ENCODE measurements at regions of chrX and their contacts with region 1.

Region 1: GRCh38 chrX:46758906-46759644 is at the start of gene SLC9A7:
- DNase-seq: peak; percentile 84
- ATAC-seq: peak; percentile 81
- H3K4me3 ChIP-seq: peak within 1 kb of the TSS; percentile 98
- H3K27ac ChIP-seq: peak within 1 kb of the TSS; percentile 68
- H3K4me1 ChIP-seq: peaks cover 32% of the 10 kb centered on the region
- H3K27me3 ChIP-seq: no peaks in the 10 kb centered on the region
- CTCF ChIP-seq: peak; percentile 80
- total RNA-seq, gene SLC9A7: 73.7 and 74.3 TPM in 2 replicates

Region 2: GRCh38 chrX:46573331-46573891 is 185.7 kb before region 1 on chrX and contains the start of gene CHST7:
- CTCF ChIA-PET with region 1: no interaction called
- POLR2A ChIA-PET with region 1: no interaction called
- intact Hi-C with region 1: loop called (anchors 10 kb)
- DNase-seq: peak; percentile 76
- ATAC-seq: peak; percentile 72
- H3K4me3 ChIP-seq: peak within 1 kb of the TSS; percentile 94
- H3K27ac ChIP-seq: peak within 1 kb of the TSS; percentile 69
- H3K4me1 ChIP-seq: peaks cover 32% of the 10 kb centered on the region
- H3K27me3 ChIP-seq: no peaks in the 10 kb centered on the region
- CTCF ChIP-seq: peak; percentile 56
- total RNA-seq, gene CHST7: 24.7 and 31.9 TPM in 2 replicates

Region 3: DNA sequence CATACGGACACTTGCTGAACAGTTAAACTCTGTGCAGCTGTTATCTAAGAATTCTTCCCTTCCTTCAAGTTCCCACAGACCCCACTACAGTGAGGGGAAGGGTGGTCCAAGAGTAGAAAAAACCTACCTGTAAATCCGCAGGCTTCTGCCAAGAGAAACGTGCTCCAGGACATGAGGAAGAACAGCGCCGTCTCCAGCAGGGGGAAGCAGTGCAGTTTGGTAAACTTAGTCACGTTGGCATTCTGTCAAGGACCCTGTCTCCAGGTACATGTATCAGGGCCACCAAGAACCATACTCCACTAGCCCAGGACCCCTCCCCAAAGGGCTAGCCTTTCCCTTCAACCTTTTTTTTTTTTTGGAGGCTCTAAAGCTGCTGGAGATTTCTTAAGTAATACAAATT is 105.6 kb before region 1 on chrX:
- CTCF ChIA-PET with region 1: no interaction called
- POLR2A ChIA-PET with region 1: no interaction called
- intact Hi-C with region 1: loop called (anchors 5 kb)
- DNase-seq: peak; percentile 48
- ATAC-seq: no peak
- H3K4me3 ChIP-seq: no peak overlapping the region
- H3K27ac ChIP-seq: peak overlapping the region; percentile 36
- H3K4me1 ChIP-seq: peaks cover 12% of the 10 kb centered on the region
- H3K27me3 ChIP-seq: no peaks in the 10 kb centered on the region
- CTCF ChIP-seq: peak; percentile 65

Region 4: DNA sequence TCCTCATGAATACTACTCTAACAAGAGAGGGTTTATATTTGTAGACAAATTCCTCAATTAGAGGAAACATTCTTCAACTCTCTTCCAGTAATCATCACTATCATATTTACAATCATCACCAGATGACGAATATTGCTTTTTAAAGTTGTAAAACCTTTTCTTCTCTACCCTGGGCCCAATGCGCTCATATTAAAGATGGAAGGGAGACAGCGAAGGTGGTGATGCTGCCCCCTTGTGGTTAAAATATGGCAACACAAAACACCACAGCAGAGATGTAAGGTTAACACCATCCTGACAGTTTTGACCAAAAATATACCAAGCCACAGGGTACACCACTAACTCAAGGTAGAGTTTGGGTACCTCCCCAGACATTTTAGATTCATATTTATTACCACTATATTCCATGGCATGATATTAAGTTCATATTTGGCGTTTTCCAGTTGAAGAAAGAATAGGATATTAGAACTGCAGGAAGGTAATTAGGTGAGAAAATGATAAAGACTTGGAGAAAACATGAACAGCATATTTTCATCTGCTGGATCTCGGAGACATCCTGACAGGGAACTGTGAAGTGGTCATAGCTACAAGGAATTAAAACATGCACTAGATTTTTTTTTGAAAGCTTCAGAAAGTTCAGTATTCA is 73.0 kb before region 1 on chrX:
- CTCF ChIA-PET with region 1: no interaction called
- POLR2A ChIA-PET with region 1: no interaction called
- intact Hi-C with region 1: loop called (anchors 10 kb)
- DNase-seq: peak; percentile 53
- ATAC-seq: peak; percentile 65
- H3K4me3 ChIP-seq: no peak overlapping the region
- H3K27ac ChIP-seq: no peak overlapping the region
- H3K4me1 ChIP-seq: peaks cover 10% of the 10 kb centered on the region; the same call in 1 of the 2 replicates
- H3K27me3 ChIP-seq: no peaks in the 10 kb centered on the region
- CTCF ChIP-seq: peak; percentile 83

Region 5: DNA sequence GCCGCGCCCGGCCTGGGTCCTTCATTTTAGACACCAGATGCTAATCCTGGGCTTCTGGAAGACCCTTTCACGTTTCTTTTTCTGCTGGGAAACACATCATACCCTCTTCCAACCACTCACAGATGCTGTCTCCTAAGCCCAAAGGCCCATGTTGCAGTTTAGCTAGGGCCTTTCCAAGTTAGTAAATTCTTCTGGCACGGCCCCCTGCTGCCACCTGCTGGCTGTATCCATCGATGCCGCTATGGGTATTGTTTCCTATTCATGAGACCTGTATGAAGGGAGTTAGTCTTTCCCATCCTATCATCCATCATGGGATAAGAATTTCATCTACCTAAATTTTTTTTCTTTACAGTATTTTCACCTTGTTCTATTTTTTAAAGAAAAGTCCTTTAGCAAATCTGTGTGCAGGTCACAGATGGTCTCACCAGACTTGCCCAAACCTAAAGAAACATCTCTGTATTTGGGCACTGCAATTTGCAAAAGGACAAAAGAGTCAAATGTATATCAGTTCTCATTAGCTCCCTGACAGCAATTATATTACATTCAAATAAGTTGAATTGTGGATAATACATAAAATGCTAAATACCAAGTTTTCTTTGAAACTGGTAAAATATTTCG is 37.6 kb after region 1 on chrX:
- CTCF ChIA-PET with region 1: interaction called, 6 read pairs
- POLR2A ChIA-PET with region 1: no interaction called
- intact Hi-C with region 1: loop called (anchors 1 kb)
- DNase-seq: peak; percentile 86
- ATAC-seq: peak; percentile 42
- H3K4me3 ChIP-seq: no peak overlapping the region
- H3K27ac ChIP-seq: no peak overlapping the region
- H3K4me1 ChIP-seq: peaks cover 29% of the 10 kb centered on the region
- H3K27me3 ChIP-seq: no peaks in the 10 kb centered on the region
- CTCF ChIP-seq: peak; percentile 88

Measured in PC-3 (cell line).